Heart right ventricle (tissue), 16 donors: ENCODE measurements at regions of chr9 and their contacts with region 1.

Region 1: DNA sequence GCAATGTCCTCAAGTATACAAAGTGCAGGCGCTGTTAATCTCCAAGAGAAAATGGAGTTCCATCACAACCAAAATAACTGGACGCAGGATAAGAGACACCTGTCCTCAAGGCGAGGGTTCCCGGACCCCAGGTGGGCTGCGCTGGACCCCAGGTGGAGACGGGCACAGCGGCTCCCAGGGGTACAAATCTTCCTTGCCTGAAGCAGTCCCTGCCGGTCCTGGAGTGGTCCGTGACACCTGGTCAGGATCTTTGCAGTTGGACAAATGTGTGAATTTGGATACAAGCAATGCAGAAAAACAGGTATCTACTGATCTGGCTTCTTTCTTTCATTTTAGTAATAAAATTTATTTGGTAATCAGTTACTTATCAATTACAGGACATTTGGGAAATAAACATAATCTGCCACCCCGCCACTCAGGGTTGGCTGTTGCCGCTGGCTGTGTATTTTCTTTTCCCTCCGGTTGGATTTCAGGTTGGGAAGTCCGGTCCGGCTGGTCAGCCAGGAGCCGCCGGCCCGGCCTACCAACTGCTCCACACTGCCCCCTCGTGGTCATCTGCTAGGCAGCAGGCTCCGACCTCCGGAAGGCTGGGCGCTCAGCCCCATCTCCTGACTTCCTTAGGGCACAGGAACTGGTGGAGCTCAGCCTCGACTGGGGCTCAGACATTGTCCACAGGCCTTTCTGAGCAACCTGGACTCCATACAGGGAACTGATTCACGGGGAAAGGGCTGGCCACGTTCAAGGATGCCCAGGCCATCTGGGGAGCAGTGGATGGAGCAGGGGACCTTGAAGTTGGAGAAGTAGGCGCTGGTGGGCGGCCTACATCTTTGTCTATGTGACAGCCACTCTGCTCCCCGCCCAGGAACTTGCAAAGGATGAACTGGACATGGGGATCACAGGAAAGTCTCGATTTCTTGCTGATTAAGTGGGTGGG is 43.4 kb downstream of the NXNL2 start:
- DNase-seq: peak; percentile 75 to 84
- ATAC-seq: peak; percentile 82 to 93 (median 88)
- H3K4me3 ChIP-seq: peak overlapping the region in 2 of 10 donors; percentile 7 to 19
- H3K27ac ChIP-seq: no peak overlapping the region
- H3K4me1 ChIP-seq: peaks cover 0 to 8% (median 0%) of the 10 kb centered on the region in 9 donors
- H3K27me3 ChIP-seq: peaks cover 0 to 9% (median 0%) of the 10 kb centered on the region in 7 donors
- CTCF ChIP-seq: peak in 8 of 9 donors; percentile 92 to 99 (median 97)

Region 2: GRCh38 chr9:87678650-87679515 is 899.5 kb before region 1 on chr9:
- intact Hi-C with region 1: loop called in 3 of 10 experiments (anchors 10 kb)
- DNase-seq: peak in 1 of 2 donors; percentile 67
- ATAC-seq: peak in 6 of 8 donors; percentile 31 to 54 (median 43)
- H3K4me3 ChIP-seq: no peak overlapping the region
- H3K27ac ChIP-seq: no peak overlapping the region
- H3K4me1 ChIP-seq: peaks cover 0 to 7% (median 0%) of the 10 kb centered on the region in 9 donors
- H3K27me3 ChIP-seq: no peaks in the 10 kb centered on the region
- CTCF ChIP-seq: peak; percentile 51 to 87 (median 82)

Region 3: DNA sequence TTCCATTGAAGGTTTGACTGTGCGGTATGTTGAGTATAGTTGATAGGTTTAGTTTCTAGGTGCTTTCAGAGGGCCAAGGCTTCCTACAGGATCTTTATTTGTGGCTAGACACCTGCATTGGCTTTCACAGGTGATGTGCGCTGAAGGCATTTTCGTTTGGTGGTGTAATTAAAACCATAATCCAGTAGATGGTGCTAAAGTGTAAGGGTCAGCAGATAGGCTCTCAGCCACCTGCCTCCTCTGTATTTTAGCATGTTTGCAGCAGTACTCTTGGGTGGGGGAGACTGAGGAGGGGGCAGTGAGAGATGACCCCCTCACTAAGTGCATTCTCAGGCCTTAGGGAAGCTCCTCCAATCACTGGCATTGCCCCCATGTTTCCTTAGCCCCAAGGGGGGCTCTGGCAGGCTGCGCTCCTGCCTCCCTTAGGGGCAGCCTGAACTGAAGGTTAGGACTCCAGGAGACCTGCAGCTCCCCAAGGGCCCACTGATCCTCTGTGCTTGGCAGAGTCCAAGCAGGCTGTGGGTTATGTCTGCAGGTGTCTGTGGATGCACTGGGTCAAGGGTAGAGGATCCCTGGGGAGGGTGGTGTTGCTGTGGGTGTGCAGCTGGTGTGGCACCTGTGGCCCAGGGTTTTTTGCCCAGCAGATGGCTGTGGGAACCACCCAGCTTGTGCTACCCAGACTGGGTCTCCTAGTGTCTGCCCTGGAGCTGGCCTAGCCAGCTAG is 627.5 kb before region 1 on chr9:
- intact Hi-C with region 1: loop called in 5 of 10 experiments (anchors 5 to 10 kb)
- DNase-seq: no peak
- ATAC-seq: peak in 2 of 8 donors; percentile 30 to 50
- H3K4me3 ChIP-seq: no peak overlapping the region
- H3K27ac ChIP-seq: no peak overlapping the region
- H3K4me1 ChIP-seq: no peaks in the 10 kb centered on the region
- H3K27me3 ChIP-seq: peaks cover 0 to 20% (median 8%) of the 10 kb centered on the region in 7 donors
- CTCF ChIP-seq: peak; percentile 26 to 51 (median 33)

Region 4: DNA sequence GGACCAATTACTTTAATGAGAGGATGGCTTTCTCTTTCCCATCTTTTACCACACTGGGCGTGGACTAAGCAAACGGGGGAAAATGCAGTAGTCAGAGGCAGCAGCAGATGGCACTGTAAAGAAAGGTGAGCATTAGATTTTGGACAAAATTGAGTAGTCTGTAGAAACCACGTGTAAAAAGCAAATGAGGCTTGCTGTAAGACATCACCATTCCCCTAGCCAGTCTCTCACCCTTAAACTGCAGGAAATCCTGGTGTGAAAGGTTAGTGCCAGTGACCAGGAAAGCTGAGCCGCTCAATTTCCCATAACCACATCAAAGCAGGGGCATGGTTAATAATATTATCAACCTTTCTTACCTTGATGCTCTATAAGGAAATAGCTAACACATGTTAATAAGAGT is 471.9 kb before region 1 on chr9:
- intact Hi-C with region 1: loop called in 6 of 10 experiments (anchors 2 to 10 kb)
- DNase-seq: peak in 1 of 2 donors; percentile 13
- ATAC-seq: peak in 1 of 8 donors; percentile 35
- H3K4me3 ChIP-seq: no peak overlapping the region
- H3K27ac ChIP-seq: no peak overlapping the region
- H3K4me1 ChIP-seq: no peaks in the 10 kb centered on the region
- H3K27me3 ChIP-seq: peaks cover 0 to 26% (median 6%) of the 10 kb centered on the region in 7 donors
- CTCF ChIP-seq: peak in 7 of 9 donors; percentile 43 to 62 (median 46)

Region 5: GRCh38 chr9:88179062-88179521 is 399.3 kb before region 1 on chr9:
- intact Hi-C with region 1: loop called in 7 of 10 experiments (anchors 5 kb)
- DNase-seq: peak in 1 of 2 donors; percentile 14
- ATAC-seq: peak in 1 of 8 donors; percentile 22
- H3K4me3 ChIP-seq: no peak overlapping the region
- H3K27ac ChIP-seq: no peak overlapping the region
- H3K4me1 ChIP-seq: peaks cover 0 to 4% (median 0%) of the 10 kb centered on the region in 9 donors
- H3K27me3 ChIP-seq: peaks cover 0 to 6% (median 0%) of the 10 kb centered on the region in 7 donors
- CTCF ChIP-seq: no peak

Region 6: GRCh38 chr9:88433583-88434255 is 144.7 kb before region 1 on chr9:
- intact Hi-C with region 1: no loop called
- DNase-seq: no peak
- ATAC-seq: no peak
- H3K4me3 ChIP-seq: no peak overlapping the region
- H3K27ac ChIP-seq: no peak overlapping the region
- H3K4me1 ChIP-seq: no peaks in the 10 kb centered on the region
- H3K27me3 ChIP-seq: no peaks in the 10 kb centered on the region
- CTCF ChIP-seq: no peak

Region 7: DNA sequence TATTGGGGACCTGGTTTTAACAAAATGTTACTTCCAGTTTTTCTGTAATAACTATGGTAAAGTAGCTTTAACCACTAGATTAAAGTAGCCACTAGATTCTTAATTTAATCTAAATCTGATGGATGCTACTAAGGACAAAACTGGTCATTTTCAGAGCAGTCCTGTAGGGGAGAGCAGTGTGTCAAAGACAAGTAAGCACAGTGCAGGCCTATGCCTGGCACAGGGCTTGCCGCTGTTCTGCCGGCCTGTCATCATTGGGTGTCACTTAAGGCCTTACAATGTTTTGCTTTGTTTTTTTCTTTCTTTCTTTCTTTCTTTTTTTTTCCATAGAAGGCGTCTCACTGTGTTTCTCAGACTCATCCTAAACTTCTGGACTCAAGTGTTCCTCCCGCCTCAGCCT is 96.5 kb before region 1 on chr9:
- intact Hi-C with region 1: loop called in 1 of 10 experiments (anchors 10 kb)
- DNase-seq: no peak
- ATAC-seq: no peak
- H3K4me3 ChIP-seq: no peak overlapping the region
- H3K27ac ChIP-seq: no peak overlapping the region
- H3K4me1 ChIP-seq: peaks cover 0 to 14% (median 9%) of the 10 kb centered on the region in 9 donors
- H3K27me3 ChIP-seq: no peaks in the 10 kb centered on the region
- CTCF ChIP-seq: no peak